ENCODE measurements at regions of chr9 and their contacts with region 1.

Region 1: DNA sequence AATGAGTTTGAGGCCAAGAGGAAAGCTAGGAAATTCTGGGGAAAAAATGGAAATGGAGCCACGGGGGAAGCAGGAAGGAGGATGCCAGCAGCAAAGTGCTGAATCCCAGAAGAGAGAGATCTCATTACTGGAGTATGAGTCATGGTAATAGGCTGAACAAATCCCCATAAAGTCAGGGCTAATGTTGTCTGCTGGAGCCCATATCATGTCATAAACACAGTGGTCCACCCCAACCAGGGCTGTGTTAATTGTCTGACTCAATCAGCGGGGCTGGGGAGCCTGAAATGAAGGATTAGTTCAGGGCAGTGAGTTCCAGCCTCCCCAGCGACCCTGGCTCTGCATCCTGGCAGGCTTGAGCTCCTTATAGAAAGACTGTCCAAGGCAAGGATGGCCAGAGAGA is 68.8 kb downstream of the TLR4 start:
- DNase-seq: peak; percentile 56
- H3K4me3 ChIP-seq: no peak overlapping the region
- H3K27ac ChIP-seq: no peak overlapping the region
- H3K4me1 ChIP-seq: peaks cover 0 to 23% (median 2%) of the 10 kb centered on the region in 4 donors
- H3K27me3 ChIP-seq: no peaks in the 10 kb centered on the region
- CTCF ChIP-seq: no peak
- EP300 ChIP-seq: no peak
- POLR2A ChIP-seq: no peak

Region 2: DNA sequence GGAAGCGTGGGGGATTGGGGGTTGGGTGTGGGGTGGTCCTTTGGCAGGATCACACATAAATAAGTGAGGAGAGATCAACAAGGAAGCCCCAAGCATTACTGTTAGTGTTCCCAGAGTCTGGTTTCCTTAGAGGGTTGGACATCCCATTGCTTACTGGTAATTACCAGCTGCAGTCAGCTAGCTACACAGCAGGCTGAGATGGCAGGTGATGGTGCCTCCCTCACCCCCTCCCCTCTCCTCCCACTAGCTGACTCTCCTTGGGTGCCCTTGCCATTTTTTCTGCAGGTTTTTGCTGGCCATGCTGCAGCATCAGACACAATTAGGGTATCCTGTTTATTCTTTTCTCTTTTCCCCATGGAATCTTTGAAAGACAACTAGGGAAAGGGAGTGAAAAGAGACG is 176.3 kb before region 1 on chr9:
- in situ Hi-C with region 1: no loop called
- intact Hi-C with region 1: no loop called
- DNase-seq: no peak
- H3K4me3 ChIP-seq: no peak overlapping the region
- H3K27ac ChIP-seq: no peak overlapping the region
- H3K4me1 ChIP-seq: no peaks in the 10 kb centered on the region
- H3K27me3 ChIP-seq: no peaks in the 10 kb centered on the region
- CTCF ChIP-seq: no peak
- EP300 ChIP-seq: no peak
- POLR2A ChIP-seq: no peak

Region 3: DNA sequence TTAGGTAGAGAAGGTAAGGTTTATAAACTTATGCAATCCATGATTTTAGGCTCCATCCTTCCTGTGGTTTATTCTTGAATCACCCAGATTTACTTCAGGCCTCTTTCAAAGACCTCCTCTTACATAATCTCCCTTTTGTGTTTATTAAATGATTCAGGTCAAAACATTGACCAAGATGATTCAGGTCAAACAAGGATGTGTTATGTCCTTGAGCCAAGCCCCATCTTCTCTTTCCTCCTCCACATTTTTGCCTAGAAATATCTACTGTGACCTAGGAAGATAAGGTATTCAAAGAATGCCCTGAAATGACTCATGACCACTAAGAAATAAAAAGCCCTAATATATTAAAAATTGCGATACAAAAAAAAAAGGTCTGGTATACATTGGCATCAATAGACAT is 100.6 kb before region 1 on chr9:
- in situ Hi-C with region 1: loop called in 1 of 4 experiments (anchors 25 kb)
- intact Hi-C with region 1: no loop called
- DNase-seq: no peak
- H3K4me3 ChIP-seq: no peak overlapping the region
- H3K27ac ChIP-seq: no peak overlapping the region
- H3K4me1 ChIP-seq: no peaks in the 10 kb centered on the region
- H3K27me3 ChIP-seq: no peaks in the 10 kb centered on the region
- CTCF ChIP-seq: no peak
- EP300 ChIP-seq: no peak
- POLR2A ChIP-seq: no peak

Region 4: GRCh38 chr9:118609355-118610044 is 836.5 kb after region 1 on chr9:
- in situ Hi-C with region 1: no loop called
- intact Hi-C with region 1: no loop called
- DNase-seq: no peak
- H3K4me3 ChIP-seq: no peak overlapping the region
- H3K27ac ChIP-seq: no peak overlapping the region
- H3K4me1 ChIP-seq: no peaks in the 10 kb centered on the region
- H3K27me3 ChIP-seq: no peaks in the 10 kb centered on the region
- CTCF ChIP-seq: no peak
- EP300 ChIP-seq: no peak
- POLR2A ChIP-seq: no peak

Measured in transverse colon (tissue), 4 donors.